Posterior cingulate gyrus (tissue), 11 donors: ENCODE measurements at regions of chr10 and their contacts with region 1.

Region 1: GRCh38 chr10:28587970-28588290 is 55.0 kb downstream of the WAC start:
- DNase-seq: no peak

Region 2: DNA sequence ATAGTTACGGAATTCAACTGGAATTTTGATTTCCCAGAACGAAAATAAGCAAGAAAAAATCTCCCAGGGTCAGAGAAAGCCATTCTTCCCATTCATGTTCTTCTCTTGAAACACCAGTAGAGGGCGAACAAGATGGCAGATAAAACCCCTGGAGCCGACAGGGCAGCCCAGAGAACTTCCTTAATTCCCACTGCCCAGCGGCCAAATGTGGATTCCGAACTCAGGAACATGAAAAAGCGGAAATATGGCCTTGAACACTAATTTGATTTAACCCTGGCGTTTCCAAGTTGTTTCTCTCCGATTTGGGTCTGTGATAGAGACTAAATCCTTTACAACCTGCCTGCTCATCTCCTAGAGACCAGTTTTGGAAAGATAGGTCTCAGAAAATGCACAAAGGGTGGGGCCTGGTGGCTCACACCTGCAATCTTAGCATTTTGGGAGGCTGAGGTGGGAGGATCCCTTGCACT is 155.7 kb before region 1 on chr10:
- intact Hi-C with region 1: loop called (anchors 2 kb)
- DNase-seq: peak in 7 of 10 donors; percentile 35 to 89 (median 46)

Region 3: GRCh38 chr10:28449926-28450325 is 138.0 kb before region 1 on chr10:
- intact Hi-C with region 1: no loop called
- DNase-seq: no peak